ENCODE measurements at regions of chr1 and their contacts with region 1.

Region 1: GRCh38 chr1:11252538-11252937 is 9.8 kb downstream of the MTOR start:
- DNase-seq: no peak
- ATAC-seq: no peak

Region 2: DNA sequence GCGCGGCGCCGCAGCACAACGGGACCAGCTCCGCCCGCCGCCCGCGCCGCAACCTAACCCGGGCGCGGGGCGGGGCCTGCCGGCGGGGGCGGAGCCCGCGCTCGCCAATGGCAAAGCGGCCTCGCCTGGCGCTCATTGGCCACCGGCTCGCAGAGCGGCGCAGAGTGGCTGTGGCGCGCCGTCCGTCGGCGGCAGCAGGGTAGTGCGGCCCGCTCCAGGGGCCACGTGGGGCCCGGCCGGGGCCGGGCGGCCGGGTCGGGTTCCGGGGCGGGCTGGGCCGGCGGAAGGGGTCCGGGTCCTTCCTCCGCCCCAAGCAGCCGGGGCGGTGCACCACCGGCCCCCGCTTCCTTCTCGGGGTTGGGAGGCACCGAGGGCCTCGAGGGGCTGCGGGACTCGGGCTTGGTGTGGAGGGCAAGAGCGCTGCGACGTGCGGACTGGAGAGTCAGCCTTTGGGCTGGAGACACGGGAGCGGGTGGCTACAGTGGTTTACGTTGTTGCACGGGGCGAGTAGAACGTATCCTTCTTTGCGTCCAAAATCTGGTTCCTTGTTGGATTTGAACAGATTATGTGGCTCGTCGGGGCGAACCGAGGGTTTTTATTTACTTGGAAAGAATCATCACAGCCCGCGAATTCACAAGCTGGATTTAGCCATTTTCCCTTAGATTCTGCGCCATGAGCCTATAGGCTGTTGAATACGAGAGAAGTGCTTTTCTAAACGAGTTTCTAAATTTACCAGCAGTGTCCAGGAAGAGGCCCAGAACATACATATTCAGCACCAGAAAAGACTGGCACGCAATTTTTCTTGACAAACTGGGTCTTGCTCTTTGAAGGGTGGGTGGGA is 192.3 kb before region 1 on chr1 and contains the start of gene SRM:
- intact Hi-C with region 1: loop called (anchors 10 kb)
- DNase-seq: peak; percentile 94
- ATAC-seq: peak; percentile 97
- total RNA-seq, gene SRM: 75.3 TPM

Region 3: GRCh38 chr1:11629184-11630016 is 376.9 kb after region 1 on chr1:
- intact Hi-C with region 1: loop called (anchors 10 kb)
- DNase-seq: no peak
- ATAC-seq: no peak